ENCODE measurements at regions of chr11 and their contacts with region 1.

Region 1: GRCh38 chr11:119356349-119357031 is 10.0 kb upstream of the MFRP start:
- DNase-seq: peak; percentile 49 to 82 (median 70)
- ATAC-seq: peak; percentile 94
- H3K4me3 ChIP-seq: peak overlapping the region; percentile 82
- H3K4me3 Mint-ChIP-seq: peak overlapping the region; percentile 81 to 96 (median 93)
- H3K27ac ChIP-seq: peak overlapping the region; percentile 48
- H3K27ac Mint-ChIP-seq: peak overlapping the region in 7 of 9 donors; percentile 38 to 93 (median 68)
- H3K4me1 ChIP-seq: no peaks in the 10 kb centered on the region
- H3K4me1 Mint-ChIP-seq: peaks cover 0 to 16% (median 5%) of the 10 kb centered on the region in 7 donors
- H3K27me3 ChIP-seq: no peaks in the 10 kb centered on the region
- H3K27me3 Mint-ChIP-seq: peaks cover 12 to 59% (median 29%) of the 10 kb centered on the region in 5 donors

Region 2: GRCh38 chr11:119334174-119334930 is 22.1 kb before region 1 on chr11 and contains the start of gene RNF26:
- CTCF ChIA-PET with region 1: interaction called, 7 read pairs
- POLR2A ChIA-PET with region 1: no interaction called
- intact Hi-C with region 1: loop called (anchors 2 kb)
- DNase-seq: peak; percentile 82 to 96 (median 94)
- ATAC-seq: peak; percentile 98
- H3K4me3 ChIP-seq: peak within 1 kb of the TSS; percentile 60
- H3K4me3 Mint-ChIP-seq: peak within 1 kb of the TSS; percentile 88 to 99 (median 98)
- H3K27ac ChIP-seq: peak within 1 kb of the TSS; percentile 89
- H3K27ac Mint-ChIP-seq: peak within 1 kb of the TSS; percentile 91 to 99 (median 97)
- H3K4me1 ChIP-seq: peaks cover 10 to 12% of the 10 kb centered on the region in 2 donors
- H3K4me1 Mint-ChIP-seq: peaks cover 22 to 59% (median 41%) of the 10 kb centered on the region in 7 donors
- H3K27me3 ChIP-seq: peaks cover 4 to 9% of the 10 kb centered on the region in 2 donors
- H3K27me3 Mint-ChIP-seq: peaks cover 9 to 30% (median 19%) of the 10 kb centered on the region in 5 donors
- total RNA-seq, gene RNF26: 16.9 to 28.3 (median 18.9) TPM

Region 3: DNA sequence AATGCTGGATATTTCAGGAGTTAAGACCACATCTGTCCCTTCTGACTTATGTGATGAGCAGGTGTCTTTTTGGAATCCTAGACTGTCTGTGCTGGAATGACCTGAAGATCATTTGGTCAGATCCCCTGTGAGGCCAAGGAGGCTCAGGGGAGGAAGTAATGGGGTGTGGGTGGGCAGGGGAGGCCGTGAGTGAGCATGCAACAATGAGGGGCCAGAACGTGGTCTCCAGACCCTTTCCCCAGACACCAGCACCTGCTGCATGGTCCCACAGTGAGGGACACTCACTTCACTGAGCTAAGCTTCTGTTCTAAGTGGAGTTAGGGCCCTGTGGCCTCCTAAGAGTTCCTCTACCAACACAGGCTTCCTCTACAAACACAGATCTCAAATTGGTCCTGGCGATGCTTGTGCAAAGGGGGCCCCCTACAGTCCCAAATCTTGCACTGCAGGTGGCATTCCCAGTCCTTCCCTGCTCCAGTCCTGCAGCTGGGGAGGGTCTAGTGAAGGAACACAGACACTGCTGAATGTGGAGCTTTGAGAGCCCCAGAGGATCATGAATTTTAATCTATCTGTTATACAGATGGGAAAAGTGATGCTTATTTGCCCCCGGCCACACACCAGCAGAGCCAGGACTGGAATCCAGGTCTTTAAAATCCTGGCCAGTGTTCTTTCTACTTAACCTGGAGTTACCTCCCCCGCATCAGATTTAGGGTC is 17.6 kb after region 1 on chr11:
- CTCF ChIA-PET with region 1: interaction called, 14 read pairs
- POLR2A ChIA-PET with region 1: interaction called, 5 read pairs
- intact Hi-C with region 1: loop called (anchors 1 kb)
- DNase-seq: peak in 6 of 9 donors; percentile 23 to 46 (median 28)
- ATAC-seq: peak; percentile 60
- H3K4me3 ChIP-seq: no peak overlapping the region
- H3K4me3 Mint-ChIP-seq: no peak overlapping the region
- H3K27ac ChIP-seq: no peak overlapping the region
- H3K27ac Mint-ChIP-seq: no peak overlapping the region
- H3K4me1 ChIP-seq: peaks cover 0 to 11% of the 10 kb centered on the region in 2 donors
- H3K4me1 Mint-ChIP-seq: peaks cover 0 to 10% (median 6%) of the 10 kb centered on the region in 7 donors
- H3K27me3 ChIP-seq: no peaks in the 10 kb centered on the region
- H3K27me3 Mint-ChIP-seq: peaks cover 5 to 23% (median 9%) of the 10 kb centered on the region in 5 donors

Region 4: DNA sequence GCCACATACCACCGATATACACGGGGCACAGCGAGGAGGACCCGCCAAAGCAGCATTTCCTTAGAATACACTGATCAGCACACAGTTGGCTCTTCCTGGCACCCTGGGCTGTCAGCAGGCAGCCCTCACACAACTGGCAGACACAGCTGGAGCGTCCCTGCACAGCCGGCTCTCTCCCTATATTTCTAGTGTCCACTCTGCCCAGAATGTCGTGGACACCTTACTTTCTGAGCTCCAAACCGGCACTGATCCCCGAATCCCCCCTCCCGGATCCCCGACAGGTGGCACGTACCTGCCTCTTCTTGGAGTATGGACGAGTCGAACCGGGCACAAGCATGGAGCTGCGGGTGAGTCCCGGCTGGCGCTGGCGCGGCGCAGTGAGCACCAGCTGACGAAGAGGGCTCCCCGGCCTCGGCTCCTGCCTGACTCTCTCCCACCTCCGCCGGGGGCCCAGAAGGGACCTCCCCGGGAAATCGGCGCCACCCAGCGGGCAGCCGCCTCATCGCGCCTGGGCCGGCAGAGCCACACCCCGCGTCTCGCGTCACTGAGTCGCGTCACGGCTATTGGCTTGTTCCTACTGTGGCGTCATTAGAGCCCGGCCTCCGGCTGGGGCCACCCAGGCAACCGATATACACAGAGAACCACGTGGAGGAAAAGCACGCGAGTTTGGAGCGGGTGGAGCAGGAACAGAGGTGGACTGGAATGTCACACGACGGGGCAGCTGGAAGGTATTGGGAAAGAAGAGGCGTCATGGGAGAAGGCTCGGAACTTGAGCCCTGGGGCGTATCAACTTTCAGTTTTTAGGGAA is 24.9 kb after region 1 on chr11 and contains the start of gene USP2:
- CTCF ChIA-PET with region 1: interaction called, 34 read pairs
- POLR2A ChIA-PET with region 1: interaction called, 6 read pairs
- intact Hi-C with region 1: loop called (anchors 1 kb)
- DNase-seq: peak; percentile 94 to 98 (median 97)
- ATAC-seq: peak; percentile 99
- H3K4me3 ChIP-seq: peak within 1 kb of the TSS; percentile 81
- H3K4me3 Mint-ChIP-seq: no peak within 1 kb of the TSS
- H3K27ac ChIP-seq: peak within 1 kb of the TSS; percentile 71
- H3K27ac Mint-ChIP-seq: peak within 1 kb of the TSS in 1 of 9 donors; percentile 87
- H3K4me1 ChIP-seq: peaks cover 9 to 14% of the 10 kb centered on the region in 2 donors
- H3K4me1 Mint-ChIP-seq: peaks cover 0 to 13% (median 5%) of the 10 kb centered on the region in 7 donors
- H3K27me3 ChIP-seq: no peaks in the 10 kb centered on the region
- H3K27me3 Mint-ChIP-seq: peaks cover 0 to 9% (median 0%) of the 10 kb centered on the region in 5 donors
- total RNA-seq, gene USP2: 0.07 to 1.1 (median 0.43) TPM

Region 5: DNA sequence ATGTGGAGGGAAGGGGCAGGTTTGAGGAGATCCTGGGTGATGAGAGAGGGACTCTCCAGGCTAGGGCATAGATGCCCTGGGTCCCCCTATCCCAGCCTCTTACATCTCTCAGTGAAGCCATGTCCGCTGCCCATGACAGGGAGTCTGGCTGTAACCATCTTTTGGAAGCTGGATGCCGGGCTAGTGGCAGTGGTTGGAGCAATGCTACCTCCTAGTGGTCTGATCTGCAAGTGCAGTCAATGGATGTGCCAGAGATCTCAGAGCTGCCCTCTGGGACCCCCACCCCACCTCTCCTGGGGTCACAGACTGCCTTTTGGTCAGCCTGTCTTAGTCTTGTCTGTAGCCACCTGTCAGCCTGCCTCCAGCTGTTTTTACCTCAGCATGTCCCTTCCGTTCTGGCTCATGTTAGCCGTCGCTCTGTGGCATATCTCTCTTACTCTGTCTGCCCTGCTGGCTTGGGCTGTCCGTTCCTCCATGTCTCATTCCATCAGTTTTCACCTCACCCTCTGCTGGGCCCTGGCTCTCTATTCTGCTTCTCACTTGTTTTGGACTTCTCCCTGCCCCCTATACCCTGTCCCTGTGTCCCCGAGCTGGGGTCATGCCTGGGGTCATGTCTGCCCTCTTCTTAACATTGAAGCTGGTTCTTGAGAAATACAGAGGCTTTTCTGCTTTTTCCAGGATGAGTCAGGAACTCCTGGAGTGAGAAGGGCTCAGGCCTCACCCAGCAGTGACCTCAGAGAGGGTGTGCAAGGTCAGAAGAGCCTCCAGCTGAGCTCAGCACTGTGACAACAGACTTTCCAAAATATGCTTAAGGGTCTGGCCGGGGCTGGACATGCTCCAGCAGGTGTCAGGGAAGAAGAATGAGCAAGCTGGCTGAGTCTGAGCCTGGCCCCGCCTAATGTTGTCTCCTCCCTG is 118.4 kb after region 1 on chr11:
- CTCF ChIA-PET with region 1: interaction called, 29 read pairs
- POLR2A ChIA-PET with region 1: interaction called, 4 read pairs
- intact Hi-C with region 1: loop called in 1 of 2 experiments (anchors 1 kb)
- DNase-seq: peak in 7 of 9 donors; percentile 27 to 49 (median 39)
- ATAC-seq: peak; percentile 77
- H3K4me3 ChIP-seq: no peak overlapping the region
- H3K4me3 Mint-ChIP-seq: no peak overlapping the region
- H3K27ac ChIP-seq: no peak overlapping the region
- H3K27ac Mint-ChIP-seq: no peak overlapping the region
- H3K4me1 ChIP-seq: no peaks in the 10 kb centered on the region
- H3K4me1 Mint-ChIP-seq: peaks cover 0 to 1% (median 0%) of the 10 kb centered on the region in 7 donors
- H3K27me3 ChIP-seq: no peaks in the 10 kb centered on the region
- H3K27me3 Mint-ChIP-seq: peaks cover 0 to 42% (median 24%) of the 10 kb centered on the region in 5 donors

Region 6: GRCh38 chr11:119651802-119652584 is 295.5 kb after region 1 on chr11:
- CTCF ChIA-PET with region 1: no interaction called
- POLR2A ChIA-PET with region 1: no interaction called
- intact Hi-C with region 1: no loop called
- DNase-seq: no peak
- ATAC-seq: no peak
- H3K4me3 ChIP-seq: no peak overlapping the region
- H3K4me3 Mint-ChIP-seq: no peak overlapping the region
- H3K27ac ChIP-seq: no peak overlapping the region
- H3K27ac Mint-ChIP-seq: no peak overlapping the region
- H3K4me1 ChIP-seq: no peaks in the 10 kb centered on the region
- H3K4me1 Mint-ChIP-seq: no peaks in the 10 kb centered on the region
- H3K27me3 ChIP-seq: no peaks in the 10 kb centered on the region
- H3K27me3 Mint-ChIP-seq: peaks cover 0 to 18% (median 10%) of the 10 kb centered on the region in 5 donors